Endothelial cell of umbilical vein (primary cell): ENCODE measurements at regions of chr4 and their contacts with region 1.

Region 1: GRCh38 chr4:118224239-118224829 is 128.5 kb downstream of the PRSS12 start:
- DNase-seq: peak; percentile 69
- H3K4me3 ChIP-seq: no peak overlapping the region
- H3K27ac ChIP-seq: no peak overlapping the region
- H3K4me1 ChIP-seq: no peaks in the 10 kb centered on the region
- H3K27me3 ChIP-seq: peaks cover 0 to 4% of the 10 kb centered on the region in 2 experiments
- CTCF ChIP-seq: peak; percentile 17 to 43
- POLR2A ChIP-seq: no peak

Region 2: GRCh38 chr4:117134386-117134785 is 1089.9 kb before region 1 on chr4:
- CTCF ChIA-PET with region 1: interaction called, 24 read pairs
- POLR2A ChIA-PET with region 1: no interaction called
- dilution Hi-C with region 1: no loop called
- intact Hi-C with region 1: loop called (anchors 2 kb)
- DNase-seq: peak; percentile 43
- H3K4me3 ChIP-seq: no peak overlapping the region
- H3K27ac ChIP-seq: no peak overlapping the region
- H3K4me1 ChIP-seq: no peaks in the 10 kb centered on the region
- H3K27me3 ChIP-seq: no peaks in the 10 kb centered on the region
- CTCF ChIP-seq: peak; percentile 15 to 24
- POLR2A ChIP-seq: no peak

Region 3: DNA sequence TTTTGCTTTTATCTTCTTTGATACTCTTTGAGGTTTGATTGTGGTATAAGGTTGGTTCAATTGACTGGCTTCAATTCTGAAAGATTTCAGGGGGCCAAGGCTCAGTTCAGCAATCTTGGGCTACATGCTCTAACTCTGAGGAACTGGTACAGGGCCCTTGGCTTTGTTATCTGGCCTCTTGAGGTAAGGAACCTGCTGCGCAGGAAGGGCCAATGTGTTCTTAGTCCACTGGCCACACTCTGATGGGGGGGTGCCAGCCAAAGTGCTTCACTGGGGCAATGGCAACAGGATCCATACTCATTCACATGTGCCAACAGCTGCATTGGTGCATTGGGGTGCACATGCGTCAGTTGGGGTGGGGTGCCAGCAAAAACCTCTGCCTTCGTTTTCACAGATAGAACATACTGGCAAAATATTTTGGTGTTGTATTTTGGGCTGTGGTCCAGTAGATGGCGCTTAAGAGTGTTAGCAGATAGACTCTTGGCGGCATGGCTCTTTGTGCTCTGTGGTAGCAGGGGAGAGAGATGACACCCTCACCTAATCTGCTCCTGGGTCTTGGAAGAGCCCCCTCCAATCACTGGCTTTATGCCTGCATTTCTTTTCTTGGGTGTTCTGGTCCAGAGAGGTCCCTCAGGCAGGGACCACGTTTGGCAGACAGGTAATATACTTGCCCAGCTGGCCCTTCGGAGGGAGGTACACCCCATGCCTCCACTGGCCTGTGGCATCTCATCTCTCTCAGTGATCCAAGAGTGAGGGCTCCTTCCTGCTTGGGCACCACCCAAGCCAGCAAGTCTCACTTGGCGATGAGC is 147.2 kb before region 1 on chr4:
- CTCF ChIA-PET with region 1: interaction called, 108 read pairs
- POLR2A ChIA-PET with region 1: no interaction called
- dilution Hi-C with region 1: no loop called
- intact Hi-C with region 1: loop called (anchors 1 kb)
- DNase-seq: peak; percentile 24
- H3K4me3 ChIP-seq: no peak overlapping the region
- H3K27ac ChIP-seq: no peak overlapping the region
- H3K4me1 ChIP-seq: no peaks in the 10 kb centered on the region
- H3K27me3 ChIP-seq: peaks cover 4% of the 10 kb centered on the region in 2 experiments
- CTCF ChIP-seq: peak; percentile 61 to 72
- POLR2A ChIP-seq: no peak

Region 4: GRCh38 chr4:118235566-118236120 is 11.3 kb after region 1 on chr4:
- CTCF ChIA-PET with region 1: interaction called, 16 read pairs
- POLR2A ChIA-PET with region 1: no interaction called
- dilution Hi-C with region 1: no loop called
- intact Hi-C with region 1: no loop called
- DNase-seq: no peak
- H3K4me3 ChIP-seq: no peak overlapping the region
- H3K27ac ChIP-seq: no peak overlapping the region
- H3K4me1 ChIP-seq: no peaks in the 10 kb centered on the region
- H3K27me3 ChIP-seq: no peaks in the 10 kb centered on the region
- CTCF ChIP-seq: no peak
- POLR2A ChIP-seq: no peak

Region 5: GRCh38 chr4:118289794-118290193 is 65.5 kb after region 1 on chr4:
- CTCF ChIA-PET with region 1: no interaction called
- POLR2A ChIA-PET with region 1: no interaction called
- dilution Hi-C with region 1: no loop called
- intact Hi-C with region 1: no loop called
- DNase-seq: no peak
- H3K4me3 ChIP-seq: no peak overlapping the region
- H3K27ac ChIP-seq: no peak overlapping the region
- H3K4me1 ChIP-seq: no peaks in the 10 kb centered on the region
- H3K27me3 ChIP-seq: no peaks in the 10 kb centered on the region
- CTCF ChIP-seq: no peak
- POLR2A ChIP-seq: no peak